Activated CD4-positive, alpha-beta T cell treated with anti-CD3 and anti-CD28 coated beads, Interleukin-2, amount 10 ng/mL, durations not matched to agents 24 days and 14 days (primary cell): ENCODE measurements at regions of chr21 and their contacts with region 1.

Region 1: DNA sequence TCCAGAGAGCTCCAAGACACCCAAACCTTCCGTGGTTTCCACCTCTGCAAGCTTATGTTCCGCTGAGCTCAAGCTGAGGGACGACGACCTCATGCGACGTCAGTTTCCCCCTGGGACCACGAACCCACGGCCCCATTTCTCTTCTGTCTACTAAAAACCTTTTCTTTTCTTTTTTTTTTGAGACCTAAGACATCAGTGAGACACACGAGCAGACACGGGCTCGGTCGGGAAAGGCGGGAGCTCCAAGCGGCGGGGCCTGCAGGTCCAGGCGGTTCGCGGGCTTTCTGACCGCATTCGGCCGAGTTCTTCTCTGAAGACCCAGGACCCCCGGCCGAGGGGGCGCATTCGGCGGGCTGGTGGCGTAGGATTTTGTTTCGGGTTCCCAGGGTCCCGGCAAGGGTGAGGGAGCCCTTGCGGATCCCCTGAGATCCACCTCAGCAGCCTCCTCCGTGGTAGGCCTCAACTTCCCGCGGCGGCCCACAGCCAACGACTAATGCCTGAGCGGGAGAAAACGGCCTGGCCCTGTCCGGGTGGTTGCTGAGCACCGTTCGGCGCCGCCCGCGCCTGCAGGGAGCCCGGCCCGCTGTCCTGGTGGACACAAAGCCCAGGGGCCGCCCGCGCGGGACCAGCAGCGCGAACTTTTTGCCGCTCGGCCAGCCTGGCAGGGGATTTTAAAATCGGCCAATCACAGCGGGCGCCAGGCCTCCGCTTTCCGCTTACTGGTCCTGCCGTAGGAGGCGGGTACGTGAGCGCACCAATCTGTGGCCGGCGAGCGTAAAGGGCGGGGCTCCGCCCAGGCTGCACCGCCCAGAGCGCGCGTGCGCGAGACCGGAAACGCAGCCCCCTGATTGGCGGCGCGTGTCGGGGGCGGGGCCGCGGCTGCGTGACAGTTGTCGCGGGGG is at the start of gene C21orf58:
- DNase-seq: peak; percentile 100
- H3K4me3 Mint-ChIP-seq: peak within 1 kb of the TSS; percentile 97
- H3K27ac Mint-ChIP-seq: peak within 1 kb of the TSS; percentile 99
- H3K4me1 Mint-ChIP-seq: peaks cover 32% of the 10 kb centered on the region
- H3K27me3 Mint-ChIP-seq: no peaks in the 10 kb centered on the region
- total RNA-seq, gene C21orf58: 28.4 and 33.4 TPM in 2 replicates

Region 2: GRCh38 chr21:46191257-46191685 is 132.2 kb before region 1 on chr21:
- intact Hi-C with region 1: no loop called
- DNase-seq: no peak
- H3K4me3 Mint-ChIP-seq: no peak overlapping the region
- H3K27ac Mint-ChIP-seq: no peak overlapping the region
- H3K4me1 Mint-ChIP-seq: no peaks in the 10 kb centered on the region
- H3K27me3 Mint-ChIP-seq: no peaks in the 10 kb centered on the region

Region 3: DNA sequence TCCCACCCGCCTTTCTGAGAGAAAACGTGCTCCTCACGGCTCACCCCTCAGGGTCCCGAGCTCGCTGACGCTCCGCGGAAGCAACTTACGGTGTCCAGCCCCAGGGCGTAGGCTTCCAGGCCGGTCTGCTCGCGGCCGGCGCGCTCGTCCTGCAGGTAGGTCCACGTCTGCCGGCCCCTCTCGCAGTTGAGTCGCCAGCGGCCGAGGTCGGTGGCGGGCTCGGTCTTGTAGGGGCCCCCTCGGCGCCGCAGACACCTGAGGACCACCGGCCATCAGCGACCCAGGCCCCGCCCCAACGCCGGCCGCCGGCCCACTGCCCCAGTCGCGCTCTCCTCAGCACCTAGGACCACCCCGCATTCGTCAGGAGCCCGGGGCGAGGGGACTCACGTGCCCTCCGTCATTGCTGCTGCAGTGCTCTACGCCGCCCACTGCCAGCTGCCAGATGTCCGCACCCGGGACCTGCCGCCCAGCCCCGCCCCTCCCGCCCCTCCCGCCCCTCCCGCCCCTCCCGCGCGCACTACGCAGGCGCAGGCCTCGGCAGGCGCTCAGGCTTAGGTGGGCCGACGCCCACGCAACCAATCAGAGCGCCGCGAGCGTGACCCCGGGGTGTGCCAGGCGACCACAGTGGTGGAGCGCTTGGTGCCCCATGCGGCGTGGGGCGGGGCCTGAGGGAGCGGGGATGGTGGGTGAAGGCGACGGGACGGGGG is 95.0 kb before region 1 on chr21 and contains the start of gene LSS:
- intact Hi-C with region 1: loop called (anchors 1 kb)
- DNase-seq: peak; percentile 99
- H3K4me3 Mint-ChIP-seq: peak within 1 kb of the TSS; percentile 94
- H3K27ac Mint-ChIP-seq: peak within 1 kb of the TSS; percentile 100
- H3K4me1 Mint-ChIP-seq: peaks cover 51% of the 10 kb centered on the region
- H3K27me3 Mint-ChIP-seq: no peaks in the 10 kb centered on the region
- total RNA-seq, gene LSS: 19.7 and 23.1 TPM in 2 replicates

Region 4: GRCh38 chr21:46253610-46254124 is 69.8 kb before region 1 on chr21:
- intact Hi-C with region 1: loop called (anchors 5 kb)
- DNase-seq: peak; percentile 89
- H3K4me3 Mint-ChIP-seq: peak overlapping the region; percentile 61
- H3K27ac Mint-ChIP-seq: peak overlapping the region; percentile 91
- H3K4me1 Mint-ChIP-seq: peaks cover 29% of the 10 kb centered on the region
- H3K27me3 Mint-ChIP-seq: no peaks in the 10 kb centered on the region

Region 5: GRCh38 chr21:46368533-46369285 is 45.2 kb after region 1 on chr21:
- intact Hi-C with region 1: loop called (anchors 5 kb)
- DNase-seq: peak; percentile 85
- H3K4me3 Mint-ChIP-seq: peak overlapping the region; percentile 77
- H3K27ac Mint-ChIP-seq: peak overlapping the region; percentile 87
- H3K4me1 Mint-ChIP-seq: peaks cover 20% of the 10 kb centered on the region
- H3K27me3 Mint-ChIP-seq: no peaks in the 10 kb centered on the region

Region 6: DNA sequence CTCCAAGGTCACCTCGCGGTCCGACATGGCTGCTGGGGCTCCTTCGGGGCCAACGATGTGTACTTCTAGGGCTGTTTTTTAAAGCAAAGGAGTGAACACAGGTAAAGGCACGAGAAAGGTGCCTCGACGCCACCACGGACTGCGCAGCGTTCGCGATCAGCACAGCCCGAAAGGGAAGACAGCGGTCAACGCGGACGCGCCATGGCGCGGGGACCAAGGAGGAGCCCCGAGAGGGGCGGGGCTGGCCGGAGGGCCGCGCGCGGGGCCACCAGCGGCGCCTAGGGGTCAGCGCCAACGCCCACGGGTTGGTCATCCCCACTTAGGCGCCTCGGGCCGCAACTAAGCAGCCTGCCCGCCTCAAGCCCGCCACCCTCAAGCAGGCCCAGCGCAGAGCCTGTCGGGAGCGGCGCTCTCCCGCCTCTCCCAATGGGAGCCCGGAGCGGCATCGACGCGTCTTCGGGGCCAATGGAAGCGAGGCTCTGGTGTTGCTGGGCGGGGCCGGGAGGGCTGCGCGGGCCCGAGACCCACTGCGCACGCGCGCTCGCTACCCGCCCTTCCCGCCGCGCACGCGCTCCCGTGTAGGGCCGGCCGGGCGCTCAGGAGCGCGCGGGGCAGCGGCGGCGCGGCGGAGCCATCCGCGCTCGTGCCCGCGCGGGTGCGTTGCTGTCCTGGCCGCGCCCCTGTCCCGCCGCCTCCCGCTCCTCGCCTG is 135.0 kb after region 1 on chr21 and contains the start of gene DIP2A:
- intact Hi-C with region 1: loop called (anchors 2 kb)
- DNase-seq: peak; percentile 98
- H3K4me3 Mint-ChIP-seq: peak within 1 kb of the TSS; percentile 93
- H3K27ac Mint-ChIP-seq: peak within 1 kb of the TSS; percentile 96
- H3K4me1 Mint-ChIP-seq: peaks cover 37% of the 10 kb centered on the region
- H3K27me3 Mint-ChIP-seq: no peaks in the 10 kb centered on the region
- total RNA-seq, gene DIP2A: 30.5 and 31.3 TPM in 2 replicates